Prostate gland (tissue), 2 donors: ENCODE measurements at regions of chr6 and their contacts with region 1.

Region 1: DNA sequence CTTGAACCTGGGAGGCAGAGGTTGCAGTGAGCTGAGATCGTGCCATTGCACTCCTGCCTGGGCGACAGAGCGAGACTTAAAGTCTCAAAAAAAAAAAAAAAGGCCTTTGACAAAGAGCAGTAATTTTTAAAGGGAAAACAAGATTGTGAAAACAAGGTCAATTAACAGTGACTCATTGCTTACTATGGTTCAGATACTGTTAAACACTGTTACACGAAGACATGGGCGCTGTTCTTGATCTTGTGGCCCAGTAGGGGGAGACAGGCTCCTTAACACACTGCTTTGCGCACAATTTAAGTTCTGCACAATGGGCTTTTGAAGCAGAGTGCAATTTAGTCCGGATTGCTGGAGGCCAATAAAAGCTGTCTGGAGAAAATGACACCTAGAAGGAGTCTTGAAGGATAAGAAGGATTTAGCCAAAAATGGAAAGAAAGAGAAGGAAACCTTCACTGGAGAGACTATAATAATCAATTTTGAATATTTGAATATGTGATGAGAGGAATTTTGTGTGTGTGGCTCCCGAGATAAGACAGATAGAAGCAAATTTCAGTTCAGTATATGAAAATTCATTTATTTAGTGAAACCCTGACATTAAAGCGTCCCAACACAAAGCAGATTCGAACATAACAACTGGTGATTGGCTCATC is 6.0 kb upstream of the LATS1 start:
- DNase-seq: peak; percentile 36
- H3K4me3 ChIP-seq: no peak overlapping the region
- H3K27ac ChIP-seq: no peak overlapping the region
- H3K4me1 ChIP-seq: no peaks in the 10 kb centered on the region
- H3K27me3 ChIP-seq: no peaks in the 10 kb centered on the region
- CTCF ChIP-seq: peak in 3 of 4 experiments; percentile 45 to 60 (median 51)
- POLR2A ChIP-seq: no peak

Region 2: DNA sequence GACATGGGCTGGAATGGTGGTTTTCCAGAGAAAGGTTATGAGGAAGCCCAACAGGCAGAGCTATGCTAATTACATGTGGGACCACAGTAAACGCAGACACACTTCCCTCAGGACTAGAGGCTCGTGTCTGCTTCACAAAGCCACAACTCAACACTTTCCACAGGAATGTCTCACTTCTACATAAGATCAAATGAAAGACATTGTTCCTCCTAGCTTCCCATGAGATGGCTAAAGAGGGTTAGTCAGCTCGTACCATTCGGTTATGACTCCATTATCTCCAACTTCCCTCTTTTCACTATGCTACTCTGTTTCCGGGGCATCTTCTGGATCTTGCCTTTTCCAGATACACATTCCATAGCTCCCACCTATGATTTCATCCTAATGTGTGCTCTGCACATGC is 210.0 kb before region 1 on chr6:
- intact Hi-C with region 1: no loop called
- DNase-seq: no peak
- H3K4me3 ChIP-seq: no peak overlapping the region
- H3K27ac ChIP-seq: no peak overlapping the region
- H3K4me1 ChIP-seq: no peaks in the 10 kb centered on the region
- H3K27me3 ChIP-seq: no peaks in the 10 kb centered on the region
- CTCF ChIP-seq: no peak
- POLR2A ChIP-seq: no peak

Region 3: GRCh38 chr6:149863697-149864577 is 140.0 kb after region 1 on chr6 and contains the start of gene LRP11:
- intact Hi-C with region 1: loop called (anchors 10 kb)
- DNase-seq: peak; percentile 93
- H3K4me3 ChIP-seq: peak within 1 kb of the TSS; percentile 68 to 75
- H3K27ac ChIP-seq: peak within 1 kb of the TSS; percentile 86 to 95
- H3K4me1 ChIP-seq: peaks cover 4% of the 10 kb centered on the region
- H3K27me3 ChIP-seq: no peaks in the 10 kb centered on the region
- CTCF ChIP-seq: peak in 2 of 4 experiments; percentile 6 to 9
- POLR2A ChIP-seq: peak; percentile 90
- total RNA-seq, gene LRP11: 52.7 to 76.3 TPM

Region 4: GRCh38 chr6:149925974-149926777 is 202.3 kb after region 1 on chr6:
- intact Hi-C with region 1: loop called (anchors 10 kb)
- DNase-seq: peak; percentile 90
- H3K4me3 ChIP-seq: peak overlapping the region; percentile 39 to 41
- H3K27ac ChIP-seq: peak overlapping the region; percentile 35 to 52
- H3K4me1 ChIP-seq: no peaks in the 10 kb centered on the region
- H3K27me3 ChIP-seq: no peaks in the 10 kb centered on the region
- CTCF ChIP-seq: peak; percentile 74 to 96 (median 88)
- POLR2A ChIP-seq: no peak